ENCODE measurements at regions of chr12 and their contacts with region 1.

Region 1: DNA sequence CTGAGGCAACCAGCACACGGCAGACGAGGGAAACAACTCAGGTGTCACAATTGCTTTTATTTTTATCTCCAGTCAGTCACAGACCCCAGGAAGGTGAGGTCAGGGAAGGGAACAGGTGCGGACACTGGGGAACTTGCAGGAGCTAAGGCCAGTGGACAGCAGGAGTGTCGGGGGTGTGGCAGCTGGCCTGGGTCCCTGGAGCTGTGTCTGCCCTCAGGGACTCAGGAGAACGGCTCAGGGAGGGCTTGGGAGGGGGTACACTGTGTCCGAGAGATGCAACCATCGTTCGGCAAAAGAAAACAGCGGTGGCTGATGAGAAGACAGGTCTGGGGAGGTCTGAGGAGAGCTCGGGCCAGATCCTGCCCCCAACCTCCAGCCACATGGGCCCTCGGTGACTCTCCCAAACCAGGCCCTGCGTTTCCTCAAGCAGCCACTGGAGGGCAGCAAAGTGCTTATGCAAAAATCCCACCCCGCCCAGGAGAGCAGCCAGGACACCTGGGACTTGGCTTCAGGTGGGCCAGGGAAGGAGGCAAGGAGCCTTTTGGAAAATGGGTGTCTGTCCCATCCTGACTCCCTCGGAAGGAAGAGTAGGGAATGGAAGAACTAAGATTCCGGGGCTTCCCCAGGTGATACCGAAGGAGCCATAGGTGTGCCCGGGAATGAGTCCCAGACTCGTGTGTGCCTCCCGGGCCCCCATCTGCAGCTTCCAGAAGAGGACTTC is 24.1 kb upstream of the BCDIN3D start:
- DNase-seq: peak; percentile 85
- ATAC-seq: no peak

Region 2: DNA sequence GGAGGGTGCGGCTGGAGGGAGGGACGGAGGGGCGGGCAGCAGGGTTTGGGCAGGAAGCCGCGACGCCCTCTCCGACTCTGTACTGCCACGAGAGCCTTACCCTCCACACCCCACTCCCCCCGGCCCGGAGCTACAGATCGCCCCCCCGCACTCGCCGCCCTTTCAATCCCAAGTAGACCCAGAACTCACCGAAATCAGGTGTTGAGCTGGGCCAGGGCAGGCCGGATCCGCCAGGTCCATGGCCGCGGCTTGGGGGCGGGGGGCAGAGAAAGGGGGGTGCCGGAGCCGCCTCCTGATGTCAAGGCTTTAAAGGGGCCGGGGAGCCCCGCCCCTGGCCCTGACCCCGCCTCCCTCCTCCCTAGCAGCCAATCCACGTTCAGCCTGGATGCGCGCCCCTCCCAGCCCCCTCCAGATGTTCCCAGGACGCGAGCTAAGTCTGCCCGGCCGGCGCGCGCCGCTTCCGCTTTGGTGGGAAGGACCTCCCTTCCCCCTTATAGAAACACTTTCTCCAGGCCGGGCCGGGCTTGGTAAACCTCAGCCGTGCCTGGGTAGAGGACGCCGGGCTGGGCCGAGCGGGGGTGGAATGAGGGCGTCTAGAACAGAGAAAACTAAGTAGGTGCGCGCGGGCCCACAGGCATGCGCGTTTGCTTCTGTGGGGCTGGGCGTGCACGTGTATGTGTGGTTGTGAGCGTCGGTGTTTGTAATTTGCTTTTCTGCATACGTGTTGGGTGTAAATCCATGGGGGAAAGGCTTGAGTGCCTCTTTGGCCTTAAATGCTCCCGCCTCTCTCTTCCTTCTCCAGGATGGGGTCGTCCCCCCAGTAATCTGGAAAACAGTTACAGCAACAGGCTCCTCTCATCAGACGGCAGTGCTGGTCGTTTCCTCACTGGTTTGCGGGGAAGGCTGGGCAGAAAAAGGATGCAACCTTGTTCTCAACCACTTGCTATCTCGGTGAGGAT is 38.6 kb before region 1 on chr12 and contains the start of gene NCKAP5L:
- intact Hi-C with region 1: no loop called
- DNase-seq: peak; percentile 99
- ATAC-seq: peak; percentile 96
- total RNA-seq, gene NCKAP5L: 32.7 TPM

Region 3: GRCh38 chr12:49945394-49946080 is 78.5 kb after region 1 on chr12:
- intact Hi-C with region 1: loop called (anchors 1 kb)
- DNase-seq: peak; percentile 88
- ATAC-seq: peak; percentile 96

Region 4: DNA sequence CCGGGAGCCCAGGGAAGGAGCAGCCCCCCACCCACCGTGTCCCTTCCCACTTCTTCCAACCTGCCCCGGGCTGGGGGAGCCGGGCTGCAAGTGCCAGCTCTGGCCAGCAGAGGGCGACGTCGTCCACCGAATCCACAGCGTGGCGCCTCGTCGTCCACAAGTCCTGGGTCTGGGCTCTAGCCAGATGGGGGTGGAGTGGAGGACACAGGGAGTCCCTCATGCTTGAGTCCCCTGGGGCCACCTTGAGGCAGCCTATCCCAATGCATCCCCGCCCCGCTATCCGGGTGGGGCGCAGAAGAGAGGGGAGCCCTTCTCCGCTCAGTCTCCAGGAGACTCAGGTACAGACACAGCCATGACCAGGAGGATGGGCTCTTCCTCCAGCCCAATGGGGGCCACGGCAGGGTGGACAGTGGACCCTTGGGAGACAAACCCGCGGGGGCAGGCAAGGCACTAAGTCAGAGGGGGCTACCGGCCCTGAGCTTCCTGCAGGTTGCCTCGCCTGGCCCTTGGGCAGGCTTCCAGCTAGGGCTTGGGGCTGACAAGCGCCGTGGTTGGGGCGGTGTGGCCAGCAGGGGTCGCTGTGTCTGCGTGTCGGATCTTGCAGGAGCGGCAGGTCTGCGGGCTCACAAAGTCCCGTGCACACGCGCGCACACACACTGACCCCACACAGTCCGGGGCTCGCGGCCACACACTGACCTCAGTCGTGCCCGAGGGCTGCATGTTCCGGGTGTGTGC is 100.2 kb after region 1 on chr12:
- intact Hi-C with region 1: loop called (anchors 2 kb)
- DNase-seq: peak; percentile 96
- ATAC-seq: peak; percentile 82

Region 5: DNA sequence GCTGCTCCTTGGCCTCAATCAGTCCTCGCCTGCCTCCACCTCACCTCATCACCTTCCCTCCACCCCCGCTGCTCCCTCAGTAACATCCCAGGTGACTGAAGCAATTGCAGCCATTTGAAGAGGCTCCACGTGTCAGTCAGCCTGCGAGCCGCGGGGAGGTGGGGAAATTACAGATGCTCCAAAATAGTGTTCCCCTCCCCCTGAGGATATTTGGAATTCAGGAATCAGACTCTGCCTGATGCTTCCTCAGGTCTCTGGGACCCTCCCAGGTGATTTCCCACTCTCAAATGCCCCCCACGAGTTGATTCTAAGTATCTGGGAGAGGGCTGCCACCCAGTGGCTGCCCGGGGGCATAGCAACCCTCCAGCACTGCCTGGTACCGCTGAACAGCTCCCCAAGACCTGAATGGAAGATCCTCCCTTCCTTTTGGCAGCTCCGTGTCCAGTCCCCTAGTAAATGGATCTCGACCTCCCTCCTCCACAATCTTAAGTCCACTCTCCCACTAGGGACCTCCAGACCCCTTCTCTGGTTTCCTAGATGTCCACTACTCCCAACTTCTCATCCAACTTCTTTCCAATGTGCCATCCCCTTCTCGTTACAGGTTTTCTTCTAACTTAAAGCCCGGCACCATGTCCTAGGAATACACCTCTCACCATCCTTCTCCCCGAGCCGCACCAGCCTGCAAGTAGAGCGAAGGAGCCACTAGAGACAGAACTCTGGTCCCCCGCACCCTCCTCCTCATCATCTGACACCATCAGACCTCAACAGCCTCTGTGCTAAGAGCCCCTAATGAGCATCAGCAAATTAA is 189.0 kb after region 1 on chr12:
- intact Hi-C with region 1: loop called (anchors 2 kb)
- DNase-seq: no peak
- ATAC-seq: peak; percentile 45

Region 6: DNA sequence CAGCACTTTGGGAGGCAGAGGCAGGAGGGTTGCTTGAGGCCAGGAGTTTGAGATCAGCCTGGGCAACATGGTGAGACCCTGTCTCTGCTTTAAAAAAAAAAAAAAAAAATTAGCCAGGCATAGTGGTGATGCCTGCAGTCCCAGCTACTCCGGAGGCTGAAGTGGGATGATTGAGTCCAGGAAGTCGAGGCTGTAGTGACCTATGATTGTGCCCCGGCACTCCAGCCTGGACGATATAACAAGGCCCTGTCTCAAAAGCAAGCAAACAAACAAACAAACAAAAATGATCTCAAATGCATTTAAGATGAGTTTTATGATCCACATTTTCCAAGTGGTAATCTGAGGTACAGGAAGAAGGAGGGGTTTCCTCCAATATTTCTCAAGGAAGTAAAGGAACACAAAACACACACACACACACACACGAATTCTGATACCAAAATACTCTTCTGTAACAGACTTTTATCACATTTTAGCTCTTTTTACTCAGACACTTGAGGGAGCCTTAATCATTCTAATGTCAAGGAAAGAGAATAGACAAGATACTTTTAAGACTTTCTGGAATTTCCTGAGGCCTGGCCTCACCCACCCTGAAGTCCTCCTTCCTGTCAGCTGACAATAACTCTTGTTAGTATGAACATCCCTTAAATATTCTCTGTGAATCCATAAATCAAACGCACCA is 344.5 kb after region 1 on chr12:
- intact Hi-C with region 1: no loop called
- DNase-seq: no peak
- ATAC-seq: peak; percentile 20